CD4-positive, alpha-beta T cell (primary cell): ENCODE measurements at regions of chr4 and their contacts with region 1.

Region 1: GRCh38 chr4:11623726-11624037 is 195.0 kb upstream of the HS3ST1 start:
- DNase-seq: peak in 4 of 14 experiments; percentile 3 to 19 (median 14)
- ATAC-seq: no peak
- H3K4me3 ChIP-seq: no peak overlapping the region
- H3K4me3 Mint-ChIP-seq: no peak overlapping the region
- H3K27ac ChIP-seq: no peak overlapping the region
- H3K27ac Mint-ChIP-seq: no peak overlapping the region
- H3K4me1 ChIP-seq: no peaks in the 10 kb centered on the region
- H3K4me1 Mint-ChIP-seq: no peaks in the 10 kb centered on the region
- H3K27me3 ChIP-seq: no peaks in the 10 kb centered on the region
- H3K27me3 Mint-ChIP-seq: no peaks in the 10 kb centered on the region
- CTCF ChIP-seq: peak; percentile 16

Region 2: GRCh38 chr4:10554694-10555093 is 1069.0 kb before region 1 on chr4:
- CTCF ChIA-PET with region 1: no interaction called
- POLR2A ChIA-PET with region 1: no interaction called
- intact Hi-C with region 1: loop called in 1 of 2 experiments (anchors 10 kb)
- DNase-seq: peak in 12 of 14 experiments; percentile 4 to 67 (median 20)
- ATAC-seq: peak; percentile 48
- H3K4me3 ChIP-seq: no peak overlapping the region
- H3K4me3 Mint-ChIP-seq: no peak overlapping the region
- H3K27ac ChIP-seq: no peak overlapping the region
- H3K27ac Mint-ChIP-seq: no peak overlapping the region
- H3K4me1 ChIP-seq: peaks cover 2% of the 10 kb centered on the region
- H3K4me1 Mint-ChIP-seq: peaks cover 6% of the 10 kb centered on the region
- H3K27me3 ChIP-seq: no peaks in the 10 kb centered on the region
- H3K27me3 Mint-ChIP-seq: peaks cover 8% of the 10 kb centered on the region
- CTCF ChIP-seq: peak; percentile 79